Panc1 (cell line): ENCODE measurements at regions of chr11 and their contacts with region 1.

Region 1: GRCh38 chr11:1532014-1532586 is 40.0 kb downstream of the DUSP8 start:
- DNase-seq: no peak
- ATAC-seq: no peak
- H3K4me3 ChIP-seq: no peak overlapping the region
- H3K27ac ChIP-seq: no peak overlapping the region
- H3K4me1 ChIP-seq: peaks cover 4% of the 10 kb centered on the region
- H3K27me3 ChIP-seq: no peaks in the 10 kb centered on the region
- CTCF ChIP-seq: no peak

Region 2: GRCh38 chr11:1632053-1632714 is 100.1 kb after region 1 on chr11:
- CTCF ChIA-PET with region 1: no interaction called
- POLR2A ChIA-PET with region 1: no interaction called
- in situ Hi-C with region 1: loop called (anchors 5 kb)
- intact Hi-C with region 1: no loop called
- DNase-seq: no peak
- ATAC-seq: no peak
- H3K4me3 ChIP-seq: no peak overlapping the region
- H3K27ac ChIP-seq: no peak overlapping the region
- H3K4me1 ChIP-seq: peaks cover 10% of the 10 kb centered on the region; the same call in 1 of the 2 replicates
- H3K27me3 ChIP-seq: peaks cover 9% of the 10 kb centered on the region
- CTCF ChIP-seq: no peak

Region 3: GRCh38 chr11:1943977-1944376 is 411.9 kb after region 1 on chr11:
- CTCF ChIA-PET with region 1: no interaction called
- POLR2A ChIA-PET with region 1: interaction called, 14 read pairs
- in situ Hi-C with region 1: no loop called
- intact Hi-C with region 1: no loop called
- DNase-seq: no peak
- ATAC-seq: peak; percentile 31
- H3K4me3 ChIP-seq: peak overlapping the region; percentile 5 to 28; a peak in 2 of 4 replicates
- H3K27ac ChIP-seq: peak overlapping the region; percentile 54; the same call in 1 of the 2 replicates
- H3K4me1 ChIP-seq: peaks cover 15% of the 10 kb centered on the region
- H3K27me3 ChIP-seq: no peaks in the 10 kb centered on the region
- CTCF ChIP-seq: no peak